IMR-90 (cell line): ENCODE measurements at regions of chr10 and their contacts with region 1.

Region 1: DNA sequence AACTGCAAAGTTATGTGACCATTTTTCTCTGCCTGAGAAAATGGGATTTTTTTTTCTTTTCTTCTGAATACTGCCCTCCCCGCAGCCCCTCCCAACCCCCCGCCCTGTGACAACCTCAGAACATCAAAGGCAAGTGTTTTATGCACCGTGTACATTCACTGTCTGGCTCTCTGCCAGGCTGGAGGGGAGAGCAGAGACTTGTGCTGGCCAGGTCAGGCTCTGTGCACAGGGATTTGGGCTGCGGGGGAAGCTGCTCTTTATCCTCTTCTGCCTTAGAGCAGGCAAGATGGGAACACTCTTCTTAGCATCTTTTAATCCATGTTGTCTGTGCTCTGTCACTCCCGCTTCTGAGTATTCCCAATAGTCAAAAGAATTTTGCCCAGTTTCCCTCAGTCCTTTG is 195.1 kb downstream of the CCSER2 start:
- DNase-seq: no peak
- ATAC-seq: peak; percentile 11
- H3K4me3 ChIP-seq: no peak overlapping the region
- H3K27ac ChIP-seq: no peak overlapping the region
- H3K4me1 ChIP-seq: no peaks in the 10 kb centered on the region
- H3K27me3 ChIP-seq: no peaks in the 10 kb centered on the region
- CTCF ChIP-seq: no peak
- POLR2A ChIP-seq: no peak
- RAD21 ChIP-seq: no peak

Region 2: GRCh38 chr10:84429926-84430520 is 93.5 kb before region 1 on chr10:
- CTCF ChIA-PET with region 1: interaction called, 3 read pairs
- POLR2A ChIA-PET with region 1: no interaction called
- dilution Hi-C with region 1: no loop called
- in situ Hi-C with region 1: no loop called
- intact Hi-C with region 1: loop called (anchors 5 kb)
- DNase-seq: peak; percentile 47
- ATAC-seq: peak; percentile 35; the same call in 1 of the 2 replicates
- H3K4me3 ChIP-seq: no peak overlapping the region
- H3K27ac ChIP-seq: no peak overlapping the region
- H3K4me1 ChIP-seq: peaks cover 6% of the 10 kb centered on the region
- H3K27me3 ChIP-seq: no peaks in the 10 kb centered on the region
- CTCF ChIP-seq: peak; percentile 51
- POLR2A ChIP-seq: no peak
- RAD21 ChIP-seq: peak; percentile 43

Region 3: DNA sequence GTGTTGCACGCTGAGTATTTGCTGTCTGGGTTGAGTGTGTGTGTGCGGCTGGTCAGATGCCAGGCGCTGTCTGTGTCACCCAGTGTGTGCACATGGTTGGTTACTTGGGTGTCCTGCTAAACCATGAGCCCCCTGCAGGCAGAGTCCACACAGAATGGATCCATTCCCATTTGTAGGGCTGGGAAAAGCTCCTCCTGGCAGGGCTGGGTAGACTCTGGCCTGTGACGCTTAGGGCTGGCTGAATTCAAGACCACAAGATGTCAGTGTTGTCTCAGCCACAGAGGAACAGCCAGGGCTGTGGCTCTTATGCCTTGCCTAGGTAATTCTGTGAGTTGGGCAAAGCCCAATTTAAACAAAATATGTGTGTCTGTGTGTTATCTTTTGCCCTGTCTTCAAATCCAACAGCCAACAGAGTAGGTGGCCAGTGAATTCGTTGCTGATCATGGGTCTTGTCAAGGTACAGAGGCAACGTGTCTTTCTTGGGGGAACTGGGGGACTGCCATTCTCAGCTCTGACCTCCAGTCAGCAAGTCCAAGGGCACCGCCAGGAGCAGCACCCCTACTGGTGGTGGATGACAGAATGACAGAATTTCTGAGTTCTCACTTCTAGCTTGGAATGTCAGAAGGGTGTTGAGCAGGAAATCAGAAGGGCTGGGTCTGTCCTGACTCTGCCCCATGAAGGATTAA is 90.0 kb after region 1 on chr10:
- CTCF ChIA-PET with region 1: no interaction called
- POLR2A ChIA-PET with region 1: no interaction called
- dilution Hi-C with region 1: no loop called
- in situ Hi-C with region 1: no loop called
- intact Hi-C with region 1: no loop called
- DNase-seq: no peak
- ATAC-seq: no peak; the same call in 1 of the 2 replicates
- H3K4me3 ChIP-seq: no peak overlapping the region
- H3K27ac ChIP-seq: no peak overlapping the region
- H3K4me1 ChIP-seq: no peaks in the 10 kb centered on the region
- H3K27me3 ChIP-seq: no peaks in the 10 kb centered on the region
- CTCF ChIP-seq: peak; percentile 30; the same call in 1 of the 2 replicates
- POLR2A ChIP-seq: no peak
- RAD21 ChIP-seq: peak; percentile 40